ENCODE measurements at regions of chr3 and their contacts with region 1.

Region 1: DNA sequence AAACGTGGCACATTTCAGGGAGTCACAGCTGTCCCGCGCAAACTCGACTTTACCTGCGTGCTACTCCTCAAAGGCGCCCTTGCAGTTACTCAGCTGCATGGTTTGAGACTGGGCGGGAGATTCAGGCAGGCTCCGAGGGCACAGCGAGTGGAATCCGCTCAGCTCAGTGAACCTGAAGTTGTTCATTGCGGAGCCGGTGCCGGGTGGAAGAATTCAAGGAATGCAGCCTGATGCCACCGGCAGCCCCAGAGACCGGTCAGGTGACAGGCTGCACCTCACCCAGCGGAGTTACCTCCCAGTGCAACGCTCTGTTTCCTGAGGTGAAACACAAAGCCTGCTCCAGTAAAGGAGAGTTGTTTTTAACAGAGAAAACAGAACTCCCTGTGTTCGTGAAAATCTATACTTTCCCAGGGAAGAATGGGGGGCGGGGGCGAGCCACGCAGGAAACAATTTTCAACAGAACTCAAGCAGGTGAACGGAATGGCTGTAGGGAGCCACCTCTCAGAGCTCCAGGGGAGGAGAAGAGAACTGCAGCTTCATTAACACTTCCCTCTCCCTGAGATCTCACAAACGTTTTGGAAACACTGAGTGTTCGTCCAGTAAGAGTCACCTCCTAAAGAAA is 3.8 kb downstream of the VEPH1 start:
- DNase-seq: no peak
- H3K4me3 ChIP-seq: peak overlapping the region; percentile 28
- CTCF ChIP-seq: no peak

Region 2: DNA sequence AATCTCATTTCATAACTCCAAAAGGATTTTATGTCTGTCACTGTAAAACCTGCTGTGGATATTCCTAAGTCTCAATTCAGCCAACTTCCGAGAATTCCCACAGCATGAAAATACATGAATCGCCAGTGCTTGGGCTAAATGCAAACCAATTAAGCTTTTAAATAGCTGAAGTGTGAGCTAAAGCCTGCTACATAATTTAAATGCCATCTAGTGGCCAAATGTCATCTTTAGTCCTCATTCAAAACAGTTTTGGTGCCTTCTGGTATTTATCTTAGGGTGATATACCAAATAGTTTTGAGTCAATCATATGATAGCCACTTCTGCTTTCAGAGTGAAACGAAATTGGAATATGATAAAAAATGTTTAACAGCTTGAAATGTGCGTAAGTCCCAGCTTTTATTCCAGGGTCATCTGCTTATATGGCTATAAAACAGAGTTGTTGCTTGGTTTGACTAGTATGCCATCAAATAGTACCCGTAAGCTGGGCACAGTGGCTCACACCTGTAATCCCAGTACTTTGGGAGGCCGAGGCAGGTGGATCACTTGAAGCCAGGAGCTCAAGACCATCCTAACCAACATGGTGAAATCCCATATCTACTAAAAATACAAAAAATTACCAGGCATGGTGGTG is 297.7 kb before region 1 on chr3:
- in situ Hi-C with region 1: loop called (anchors 5 kb)
- DNase-seq: peak; percentile 44
- H3K4me3 ChIP-seq: no peak overlapping the region
- CTCF ChIP-seq: peak; percentile 47

Region 3: DNA sequence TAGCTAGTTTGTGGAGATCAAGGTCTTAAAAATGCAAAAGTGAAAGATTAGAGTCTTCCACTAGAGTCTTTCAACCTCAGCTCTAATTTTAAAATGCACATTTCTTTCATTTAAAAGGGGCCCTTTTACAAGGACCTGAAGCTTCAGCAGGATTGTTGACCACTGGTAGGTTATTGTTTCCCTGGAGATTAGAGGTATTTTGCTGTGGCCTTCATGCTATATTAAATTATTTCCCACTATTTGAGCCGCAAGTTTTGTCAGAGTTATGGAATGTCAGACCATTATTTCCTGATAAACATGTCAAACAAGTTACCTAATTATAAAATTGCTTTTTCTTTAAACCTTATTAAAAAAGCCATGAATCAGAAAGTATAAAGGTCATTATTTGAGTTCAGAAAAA is 236.4 kb before region 1 on chr3:
- in situ Hi-C with region 1: no loop called
- DNase-seq: peak; percentile 64
- H3K4me3 ChIP-seq: no peak overlapping the region
- CTCF ChIP-seq: no peak

Region 4: DNA sequence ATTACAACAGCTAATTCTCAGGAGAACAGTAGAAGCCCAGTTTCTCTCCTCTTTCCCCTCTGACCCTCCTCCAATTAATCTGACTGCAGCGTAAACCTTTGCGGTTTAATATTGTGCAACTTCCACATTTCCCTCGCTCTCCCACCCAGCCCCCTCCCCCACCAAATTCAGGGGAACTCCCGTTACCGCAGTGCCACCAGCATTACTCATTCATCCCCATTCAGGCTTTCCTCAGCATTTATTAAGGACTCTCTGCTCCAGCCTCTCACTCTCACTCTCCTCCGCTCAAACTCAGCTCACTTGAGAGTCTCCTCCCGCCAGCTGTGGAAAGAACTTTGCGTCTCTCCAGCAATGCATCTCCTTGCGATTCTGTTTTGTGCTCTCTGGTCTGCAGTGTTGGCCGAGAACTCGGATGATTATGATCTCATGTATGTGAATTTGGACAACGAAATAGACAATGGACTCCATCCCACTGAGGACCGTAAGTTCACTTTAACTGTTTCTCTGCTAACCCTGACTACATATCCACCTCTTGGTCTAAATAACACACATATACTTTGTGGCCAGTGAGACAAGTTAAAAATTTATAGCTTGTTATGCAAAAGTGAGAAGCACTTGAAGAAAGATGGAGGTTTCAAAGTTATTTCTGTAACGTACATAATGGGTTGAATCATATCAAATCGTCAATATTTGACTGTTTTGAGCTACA is 62.7 kb before region 1 on chr3 and contains the start of gene PTX3:
- in situ Hi-C with region 1: loop called (anchors 5 kb)
- DNase-seq: peak; percentile 77
- H3K4me3 ChIP-seq: peak within 1 kb of the TSS; percentile 65
- CTCF ChIP-seq: no peak

Region 5: GRCh38 chr3:157532529-157533297 is 33.3 kb after region 1 on chr3:
- in situ Hi-C with region 1: loop called (anchors 5 kb)
- DNase-seq: peak; percentile 85
- H3K4me3 ChIP-seq: no peak overlapping the region
- CTCF ChIP-seq: peak; percentile 80

Region 6: GRCh38 chr3:157961665-157962064 is 462.2 kb after region 1 on chr3:
- in situ Hi-C with region 1: no loop called
- DNase-seq: no peak
- H3K4me3 ChIP-seq: no peak overlapping the region
- CTCF ChIP-seq: no peak

Measured in astrocyte of the cerebellum (primary cell).